SK-N-SH (cell line): ENCODE measurements at regions of chr17 and their contacts with region 1.

Region 1: GRCh38 chr17:58136669-58137283 is 11.4 kb upstream of the OR4D1 start:
- DNase-seq: peak; percentile 63
- H3K4me3 ChIP-seq: no peak overlapping the region
- H3K27ac ChIP-seq: no peak overlapping the region
- H3K4me1 ChIP-seq: no peaks in the 10 kb centered on the region
- H3K27me3 ChIP-seq: peaks cover 45% of the 10 kb centered on the region; the same call in 1 of the 2 replicates
- CTCF ChIP-seq: peak; percentile 56
- EP300 ChIP-seq: no peak
- RAD21 ChIP-seq: peak; percentile 63

Region 2: GRCh38 chr17:58121925-58122324 is 14.9 kb before region 1 on chr17:
- CTCF ChIA-PET with region 1: interaction called, 10 read pairs
- POLR2A ChIA-PET with region 1: no interaction called
- DNase-seq: peak; percentile 58
- H3K4me3 ChIP-seq: no peak overlapping the region
- H3K27ac ChIP-seq: no peak overlapping the region
- H3K4me1 ChIP-seq: no peaks in the 10 kb centered on the region
- H3K27me3 ChIP-seq: no peaks in the 10 kb centered on the region
- CTCF ChIP-seq: peak; percentile 48
- EP300 ChIP-seq: no peak
- RAD21 ChIP-seq: peak; percentile 74